Dendritic cell treated with granulocyte-macrophage colony-stimulating factor and Interleukin-4, amounts not matched to agents 40 ng/mL and 50 ng/mL, for 4 days (primary cell): ENCODE measurements at regions of chr14 and their contacts with region 1.

Region 1: DNA sequence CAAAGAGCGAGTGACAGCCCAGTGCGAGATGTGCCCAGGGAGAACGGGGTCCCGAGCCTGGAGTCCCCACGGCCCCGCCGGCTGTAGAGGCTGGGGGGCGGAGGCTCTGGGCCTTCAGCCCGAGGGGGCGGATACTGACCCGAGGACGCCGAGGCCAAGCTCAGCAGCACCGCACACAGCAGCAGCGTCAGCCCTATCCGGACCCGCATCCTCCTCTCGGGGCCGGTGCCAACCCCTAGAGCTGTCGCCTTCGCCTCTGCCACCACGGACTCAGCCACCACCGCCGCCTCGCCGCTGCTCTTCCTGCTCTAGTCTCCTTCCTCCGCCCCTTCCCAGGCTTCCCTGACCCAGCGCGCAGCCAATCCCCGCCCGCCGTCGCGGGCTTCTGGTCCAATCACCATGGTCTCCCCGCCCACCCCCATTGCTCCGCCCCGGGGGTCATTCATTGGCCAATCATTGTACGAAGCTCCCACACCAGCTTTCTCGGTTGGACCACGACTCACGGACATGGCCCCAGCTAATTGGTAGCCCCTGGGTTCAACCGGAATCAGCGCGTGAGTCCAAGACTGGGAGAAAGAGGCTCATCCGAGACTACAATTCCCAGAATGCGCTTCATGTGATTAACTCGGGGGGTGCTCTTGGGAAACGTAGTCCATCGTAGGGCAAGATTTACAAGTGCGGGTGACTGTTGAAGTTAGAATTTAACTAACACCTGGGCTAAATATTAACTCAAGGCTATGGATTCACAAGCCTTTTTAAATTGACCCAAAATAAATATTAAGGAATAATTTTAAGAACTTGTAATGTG is at the start of gene SEL1L:
- H3K4me3 Mint-ChIP-seq: peak within 1 kb of the TSS; percentile 93
- H3K27ac Mint-ChIP-seq: peak within 1 kb of the TSS; percentile 92
- H3K4me1 Mint-ChIP-seq: peaks cover 38% of the 10 kb centered on the region
- H3K27me3 Mint-ChIP-seq: no peaks in the 10 kb centered on the region

Region 2: DNA sequence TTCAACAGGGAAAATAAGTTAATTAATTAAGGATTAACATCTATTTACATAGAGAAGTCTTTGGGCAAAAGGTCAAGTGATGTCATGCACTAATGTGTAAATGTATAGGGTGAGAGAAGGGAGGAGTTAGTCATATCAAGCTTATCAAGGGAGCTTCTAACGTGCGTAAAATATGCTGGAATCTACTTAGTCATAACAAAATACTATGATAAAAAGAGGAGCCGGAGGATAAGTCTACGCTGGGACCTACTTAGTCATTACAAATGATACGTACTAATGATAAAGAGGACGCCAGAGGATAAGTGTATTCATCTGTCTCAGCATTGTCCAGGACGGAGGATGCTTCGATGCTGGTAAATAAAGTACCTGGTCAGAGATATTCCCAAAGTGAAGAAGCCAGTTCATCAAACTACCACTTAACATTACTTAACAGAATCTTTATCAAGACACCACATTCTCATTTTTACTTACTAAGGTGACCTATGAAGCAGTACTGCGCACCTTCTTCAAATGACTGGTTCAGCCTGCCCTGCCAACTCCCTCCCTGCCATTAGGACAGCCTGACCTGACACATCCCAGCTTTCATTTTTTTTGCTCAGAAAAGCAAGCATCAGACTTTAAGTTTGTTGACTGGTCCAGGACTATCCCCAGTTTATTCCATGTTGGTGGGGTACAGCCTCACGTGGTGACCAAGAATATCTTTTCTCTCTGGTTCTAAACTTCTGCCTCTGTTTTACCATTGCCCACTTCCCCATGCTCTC is 246.5 kb before region 1 on chr14:
- intact Hi-C with region 1: no loop called
- H3K4me3 Mint-ChIP-seq: no peak overlapping the region
- H3K27ac Mint-ChIP-seq: no peak overlapping the region
- H3K4me1 Mint-ChIP-seq: peaks cover 30% of the 10 kb centered on the region
- H3K27me3 Mint-ChIP-seq: peaks cover 3% of the 10 kb centered on the region

Region 3: DNA sequence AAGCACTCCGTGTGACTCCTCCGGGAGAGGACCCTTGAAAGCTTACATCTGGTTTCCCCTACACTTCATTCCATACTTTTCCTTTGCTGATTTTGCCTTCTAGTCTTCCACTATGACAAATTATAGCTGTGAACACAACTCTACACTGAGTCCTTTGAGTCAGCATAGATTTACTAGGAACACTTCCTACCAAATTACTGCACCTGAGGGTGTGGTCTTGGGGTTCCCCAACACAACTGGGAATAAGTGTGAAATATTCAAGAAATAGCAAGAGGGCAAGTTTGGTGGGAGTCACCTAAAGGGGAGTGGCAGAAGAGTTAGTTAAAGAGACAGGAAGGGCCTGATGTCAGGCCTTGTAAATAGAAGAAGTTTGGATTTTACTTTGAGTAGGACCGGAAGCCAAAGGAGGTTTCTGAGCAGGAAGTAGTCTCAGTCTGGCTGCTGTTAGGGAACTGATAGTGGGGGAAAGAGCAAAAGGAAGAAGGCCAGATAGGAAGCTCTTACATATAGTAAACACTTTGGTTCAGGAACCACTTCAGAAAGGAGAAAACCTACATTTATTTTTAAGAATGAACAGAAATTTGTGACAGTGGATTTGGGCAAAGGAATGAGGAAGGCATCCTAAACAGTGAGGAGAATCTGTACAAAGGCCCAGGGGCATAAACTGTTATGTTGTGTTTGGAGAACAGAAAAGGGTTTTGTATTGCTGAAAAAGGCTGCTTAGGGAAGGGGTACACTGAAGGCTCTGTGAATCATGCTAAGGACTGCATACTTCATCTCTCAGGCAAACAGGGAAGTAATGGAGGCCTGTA is 14.3 kb before region 1 on chr14:
- intact Hi-C with region 1: loop called (anchors 2 kb)
- H3K4me3 Mint-ChIP-seq: peak overlapping the region; percentile 24
- H3K27ac Mint-ChIP-seq: peak overlapping the region; percentile 72
- H3K4me1 Mint-ChIP-seq: peaks cover 26% of the 10 kb centered on the region
- H3K27me3 Mint-ChIP-seq: no peaks in the 10 kb centered on the region

Region 4: GRCh38 chr14:81618695-81619094 is 85.0 kb after region 1 on chr14:
- intact Hi-C with region 1: no loop called
- H3K4me3 Mint-ChIP-seq: no peak overlapping the region
- H3K27ac Mint-ChIP-seq: no peak overlapping the region
- H3K4me1 Mint-ChIP-seq: peaks cover 6% of the 10 kb centered on the region
- H3K27me3 Mint-ChIP-seq: no peaks in the 10 kb centered on the region